ENCODE measurements at regions of chr15 and their contacts with region 1.

Region 1: DNA sequence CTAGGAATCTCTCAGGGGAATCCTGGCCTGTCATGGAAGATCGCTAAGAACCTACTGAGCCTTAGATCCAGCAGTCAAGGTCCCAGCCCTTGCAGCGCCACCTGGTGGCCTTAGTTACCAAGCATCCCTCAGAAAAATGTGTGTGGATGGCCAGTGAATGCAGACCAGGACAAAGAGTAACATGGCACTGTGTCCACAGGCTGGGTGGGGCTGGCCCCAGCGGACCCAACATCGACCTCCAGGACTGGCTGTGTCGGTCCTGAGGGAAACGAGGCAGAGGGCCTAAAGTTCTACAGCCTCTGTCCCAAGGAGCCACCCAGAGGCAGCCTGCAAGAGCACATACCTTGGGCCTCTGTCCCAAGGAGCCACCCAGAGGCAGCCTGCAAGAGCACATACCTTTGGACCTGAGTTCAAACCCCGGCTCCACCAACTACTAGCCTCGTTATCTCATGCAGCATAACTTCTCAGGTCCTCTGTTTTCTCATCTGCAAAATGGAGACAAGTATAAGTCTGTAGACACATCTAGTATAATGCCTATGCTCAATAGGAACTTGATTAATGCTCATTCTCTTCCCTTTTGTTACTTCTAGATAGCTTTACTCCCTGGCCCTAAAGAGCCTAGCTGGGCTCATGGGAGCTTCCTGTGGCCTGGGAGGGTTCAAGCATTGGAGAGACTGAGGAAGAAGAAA is 57.5 kb upstream of the HERC1 start:
- H3K4me3 Mint-ChIP-seq: no peak overlapping the region
- H3K27ac Mint-ChIP-seq: no peak overlapping the region
- H3K4me1 Mint-ChIP-seq: peaks cover 72% of the 10 kb centered on the region
- H3K27me3 Mint-ChIP-seq: peaks cover 8% of the 10 kb centered on the region

Region 2: DNA sequence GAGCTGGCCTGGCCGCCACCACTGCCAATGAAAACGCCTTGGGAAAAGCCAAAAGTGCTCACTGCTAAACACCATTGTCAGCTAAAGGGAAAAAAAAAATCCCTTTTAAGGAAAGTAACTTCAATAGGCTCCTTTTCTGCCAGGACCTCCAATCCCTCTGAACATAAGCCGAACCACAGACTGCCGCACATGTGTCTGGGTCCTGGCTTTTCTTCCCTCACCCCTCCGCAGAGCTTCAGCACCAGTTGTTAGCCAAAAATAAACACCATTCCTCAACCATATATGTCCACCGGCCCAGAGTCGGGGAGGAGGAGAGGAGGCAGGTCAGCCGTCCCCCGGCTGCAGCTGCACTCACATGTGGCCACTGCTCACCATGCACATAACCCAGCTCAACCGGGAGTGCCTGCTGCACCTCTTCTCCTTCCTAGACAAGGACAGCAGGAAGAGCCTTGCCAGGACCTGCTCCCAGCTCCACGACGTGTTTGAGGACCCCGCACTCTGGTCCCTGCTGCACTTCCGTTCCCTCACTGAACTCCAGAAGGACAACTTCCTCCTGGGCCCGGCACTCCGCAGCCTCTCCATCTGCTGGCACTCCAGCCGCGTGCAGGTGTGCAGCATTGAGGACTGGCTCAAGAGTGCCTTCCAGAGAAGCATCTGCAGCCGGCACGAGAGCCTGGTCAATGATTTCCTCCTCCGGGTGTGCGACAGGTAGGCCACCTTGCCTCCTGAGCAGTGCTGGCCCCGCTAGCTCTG is 294.0 kb before region 1 on chr15 and contains the start of gene FBXL22:
- intact Hi-C with region 1: no loop called
- H3K4me3 Mint-ChIP-seq: no peak within 1 kb of the TSS
- H3K27ac Mint-ChIP-seq: peak within 1 kb of the TSS; percentile 73
- H3K4me1 Mint-ChIP-seq: peaks cover 75% of the 10 kb centered on the region
- H3K27me3 Mint-ChIP-seq: no peaks in the 10 kb centered on the region

Region 3: DNA sequence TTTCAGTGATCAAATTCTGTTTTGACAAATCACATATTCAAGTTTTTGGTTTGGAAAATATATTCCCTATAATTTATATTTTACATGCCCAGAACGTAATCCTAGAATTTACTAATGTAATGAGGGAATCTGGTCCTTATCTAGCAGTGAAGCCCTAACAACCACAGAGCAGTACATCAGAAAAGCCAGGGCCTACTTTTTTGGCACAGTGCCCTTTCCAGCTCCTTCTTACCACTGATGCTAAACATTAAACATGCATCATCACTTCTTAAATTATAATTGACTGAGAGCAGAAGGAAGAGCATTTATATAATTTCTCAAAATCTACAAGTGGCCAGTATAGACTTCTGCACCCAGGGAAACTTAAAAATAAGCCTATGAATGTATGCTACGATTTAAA is 227.3 kb before region 1 on chr15:
- intact Hi-C with region 1: no loop called
- H3K4me3 Mint-ChIP-seq: no peak overlapping the region
- H3K27ac Mint-ChIP-seq: no peak overlapping the region
- H3K4me1 Mint-ChIP-seq: peaks cover 9% of the 10 kb centered on the region
- H3K27me3 Mint-ChIP-seq: no peaks in the 10 kb centered on the region

Region 4: DNA sequence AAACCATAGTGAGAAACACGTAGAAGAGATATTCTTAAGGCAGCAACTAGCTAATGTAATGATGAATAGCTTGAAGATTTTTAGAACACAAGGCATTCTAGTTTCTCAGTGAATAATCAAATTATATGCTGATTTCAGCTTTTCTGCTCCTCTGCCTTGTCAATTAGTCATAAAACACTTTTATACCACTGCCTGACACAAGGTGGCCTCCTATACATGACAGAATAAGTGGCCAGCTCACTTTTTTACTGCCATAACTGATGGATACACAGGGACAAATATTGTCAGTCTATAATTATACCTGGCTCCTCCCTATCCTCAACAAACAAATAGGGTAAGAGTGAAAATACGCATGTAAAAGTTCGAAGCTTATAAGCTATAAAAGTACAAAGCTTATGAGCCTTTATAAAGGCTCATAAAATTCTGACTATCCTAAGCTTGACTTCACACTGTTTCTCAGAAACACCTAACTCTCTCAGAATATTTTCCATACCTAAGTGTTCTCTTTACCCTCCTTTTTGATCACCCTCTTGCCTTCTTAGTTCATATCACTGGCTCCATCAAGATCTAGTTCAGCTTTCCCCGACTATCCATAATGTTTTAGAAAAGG is 139.0 kb before region 1 on chr15:
- intact Hi-C with region 1: loop called (anchors 2 kb)
- H3K4me3 Mint-ChIP-seq: no peak overlapping the region
- H3K27ac Mint-ChIP-seq: no peak overlapping the region
- H3K4me1 Mint-ChIP-seq: no peaks in the 10 kb centered on the region
- H3K27me3 Mint-ChIP-seq: no peaks in the 10 kb centered on the region

Region 5: GRCh38 chr15:63833021-63833696 is 58.1 kb before region 1 on chr15:
- intact Hi-C with region 1: loop called (anchors 5 kb)
- H3K4me3 Mint-ChIP-seq: peak overlapping the region; percentile 87
- H3K27ac Mint-ChIP-seq: peak overlapping the region; percentile 96
- H3K4me1 Mint-ChIP-seq: peaks cover 37% of the 10 kb centered on the region
- H3K27me3 Mint-ChIP-seq: peaks cover 12% of the 10 kb centered on the region

Region 6: DNA sequence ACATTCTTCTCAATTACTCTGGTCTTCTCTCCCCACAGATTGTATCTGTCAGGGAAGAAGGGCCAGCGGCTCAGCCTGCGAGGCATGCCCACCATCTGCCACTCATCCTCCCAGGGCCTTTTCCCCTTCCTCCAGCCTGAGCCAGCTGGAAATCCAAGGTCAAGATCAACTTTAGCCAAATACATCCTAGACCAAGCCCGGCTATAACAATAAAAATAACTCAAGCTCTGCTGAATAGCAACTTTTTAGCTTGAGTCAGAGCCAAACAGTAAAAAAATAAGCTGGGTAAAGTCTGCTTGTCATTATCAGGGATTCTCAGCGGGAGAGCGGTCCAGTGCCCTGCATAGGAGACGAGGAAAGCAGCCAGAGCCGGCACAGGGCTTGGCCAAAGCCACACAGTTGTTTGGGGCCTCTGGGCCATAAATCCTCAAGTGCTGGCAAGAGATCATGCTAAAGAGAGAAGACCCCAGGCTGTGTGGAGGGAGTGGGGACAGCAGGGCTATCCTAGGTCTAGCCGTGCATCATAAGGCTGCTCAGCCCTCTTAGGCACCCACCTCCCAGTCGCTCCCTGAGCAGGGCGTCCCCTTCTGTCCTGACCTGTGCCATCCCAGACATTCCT is 18.7 kb after region 1 on chr15:
- intact Hi-C with region 1: no loop called
- H3K4me3 Mint-ChIP-seq: no peak overlapping the region
- H3K27ac Mint-ChIP-seq: no peak overlapping the region
- H3K4me1 Mint-ChIP-seq: peaks cover 37% of the 10 kb centered on the region
- H3K27me3 Mint-ChIP-seq: peaks cover 12% of the 10 kb centered on the region

Region 7: GRCh38 chr15:63953524-63953923 is 62.3 kb after region 1 on chr15:
- intact Hi-C with region 1: no loop called
- H3K4me3 Mint-ChIP-seq: no peak overlapping the region
- H3K27ac Mint-ChIP-seq: no peak overlapping the region
- H3K4me1 Mint-ChIP-seq: peaks cover 36% of the 10 kb centered on the region
- H3K27me3 Mint-ChIP-seq: peaks cover 2% of the 10 kb centered on the region

Region 8: DNA sequence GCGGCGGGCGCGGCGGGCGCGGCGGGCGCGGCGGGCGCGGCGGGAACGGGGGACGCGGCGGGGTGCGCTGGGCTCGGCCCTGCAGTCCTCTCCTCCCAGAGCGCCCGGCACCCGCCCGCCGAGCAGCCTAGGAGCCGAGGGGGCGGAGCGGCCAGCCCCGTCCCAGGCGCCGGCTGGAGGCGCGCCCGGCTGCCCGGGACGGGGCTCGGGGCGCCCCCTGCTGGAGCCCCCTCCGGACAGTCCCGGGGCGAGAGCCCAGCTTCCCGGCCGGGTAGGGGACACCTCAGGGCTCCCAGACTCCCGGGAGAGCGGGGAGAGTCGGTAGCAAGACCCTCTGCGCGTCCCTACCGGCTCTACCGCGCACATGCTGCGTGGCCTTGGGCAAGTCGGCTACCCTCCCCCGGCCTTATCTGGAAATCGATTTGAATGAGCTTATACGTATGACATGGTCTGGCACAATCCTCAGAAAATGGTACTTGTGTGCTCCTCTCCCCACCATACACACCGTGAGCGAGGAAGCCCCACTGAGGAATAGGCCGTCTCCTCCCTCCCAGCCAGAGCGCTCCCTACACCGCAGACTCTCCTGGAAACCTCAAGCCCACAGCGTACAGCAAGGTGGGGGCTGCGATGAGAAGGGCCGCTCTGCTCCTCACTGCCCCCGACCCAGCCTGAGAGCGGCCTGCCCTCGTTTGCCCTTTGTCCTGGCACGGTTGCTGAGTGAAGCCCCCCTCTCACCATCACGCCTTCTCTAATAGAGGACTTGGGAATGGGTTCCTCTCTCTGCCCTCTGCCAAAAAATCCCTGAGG is 155.3 kb after region 1 on chr15 and contains the start of gene DAPK2:
- intact Hi-C with region 1: loop called (anchors 10 kb)
- H3K4me3 Mint-ChIP-seq: peak within 1 kb of the TSS; percentile 54
- H3K27ac Mint-ChIP-seq: no peak within 1 kb of the TSS
- H3K4me1 Mint-ChIP-seq: peaks cover 72% of the 10 kb centered on the region
- H3K27me3 Mint-ChIP-seq: peaks cover 73% of the 10 kb centered on the region

Region 9: DNA sequence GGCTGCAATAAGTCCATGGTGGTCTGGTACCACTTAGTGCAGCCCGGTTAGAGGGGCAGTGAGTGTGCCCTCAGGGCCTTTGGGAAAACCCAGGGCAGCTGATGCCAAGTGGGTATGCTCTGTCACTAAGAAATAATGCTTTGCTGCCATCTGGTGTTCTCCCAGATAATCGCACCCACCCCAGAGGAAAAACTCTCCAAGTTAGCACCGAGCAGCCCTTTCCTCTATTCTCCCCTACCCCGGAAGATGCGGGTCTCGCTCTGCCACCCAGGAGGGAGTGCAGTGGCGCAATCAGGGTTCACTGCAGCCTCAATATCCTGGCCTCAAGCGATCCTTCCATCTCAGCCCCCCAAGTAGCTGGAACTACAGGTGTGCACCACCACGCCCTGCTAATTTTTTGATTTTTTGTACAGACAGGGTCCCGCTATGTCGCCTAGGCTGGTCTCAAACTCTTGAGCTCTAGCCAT is 176.4 kb after region 1 on chr15:
- intact Hi-C with region 1: loop called (anchors 5 kb)
- H3K4me3 Mint-ChIP-seq: no peak overlapping the region
- H3K27ac Mint-ChIP-seq: no peak overlapping the region
- H3K4me1 Mint-ChIP-seq: peaks cover 39% of the 10 kb centered on the region
- H3K27me3 Mint-ChIP-seq: no peaks in the 10 kb centered on the region